Lower leg skin (tissue), 4 donors: ENCODE measurements at regions of chr6 and their contacts with region 1.

Region 1: GRCh38 chr6:80946402-80946801 is 806.1 kb downstream of the TENT5A start:
- DNase-seq: no peak
- H3K4me3 ChIP-seq: no peak overlapping the region
- CTCF ChIP-seq: no peak
- POLR2A ChIP-seq: no peak

Region 2: GRCh38 chr6:81491454-81492101 is 545.2 kb after region 1 on chr6:
- intact Hi-C with region 1: loop called (anchors 5 kb)
- DNase-seq: no peak
- H3K4me3 ChIP-seq: no peak overlapping the region
- CTCF ChIP-seq: no peak
- POLR2A ChIP-seq: no peak